ENCODE measurements at regions of chr9 and their contacts with region 1.

Region 1: GRCh38 chr9:79757881-79758669 is 186.3 kb downstream of the TLE4 start:
- ATAC-seq: peak in 2 of 8 experiments; percentile 26 to 53
- H3K4me3 ChIP-seq: no peak overlapping the region
- H3K27ac ChIP-seq: no peak overlapping the region
- H3K4me1 ChIP-seq: no peaks in the 10 kb centered on the region

Region 2: DNA sequence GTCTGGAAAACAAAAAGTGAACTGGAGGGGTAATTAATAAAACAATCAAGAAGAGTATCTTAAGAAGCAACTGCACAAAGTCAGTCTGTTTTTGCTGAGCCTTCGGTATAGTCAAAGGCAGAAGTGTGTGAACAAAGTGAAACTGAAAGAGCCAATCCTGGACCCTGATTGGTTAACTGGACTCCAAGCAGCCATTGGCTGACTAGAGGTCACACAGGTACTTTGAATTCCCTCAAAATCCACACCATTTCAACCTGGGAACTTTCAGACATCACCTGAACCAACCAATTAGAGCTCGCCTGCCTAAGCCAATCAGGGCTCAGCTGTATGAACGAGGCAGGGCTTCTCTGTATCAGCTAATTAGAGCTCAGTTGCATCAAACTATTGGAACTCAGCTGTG is 100.4 kb after region 1 on chr9:
- in situ Hi-C with region 1: loop called in 1 of 9 experiments (anchors 25 kb)
- ATAC-seq: peak in 2 of 8 experiments; percentile 72 to 90
- H3K4me3 ChIP-seq: no peak overlapping the region
- H3K27ac ChIP-seq: no peak overlapping the region
- H3K4me1 ChIP-seq: no peaks in the 10 kb centered on the region